Activated CD8-positive, alpha-beta memory T cell treated with anti-CD3 and anti-CD28 coated beads, Interleukin-2, amount 10 ng/mL, durations not matched to agents 7 days and 5 days (primary cell): ENCODE measurements at regions of chr5 and their contacts with region 1.

Region 1: DNA sequence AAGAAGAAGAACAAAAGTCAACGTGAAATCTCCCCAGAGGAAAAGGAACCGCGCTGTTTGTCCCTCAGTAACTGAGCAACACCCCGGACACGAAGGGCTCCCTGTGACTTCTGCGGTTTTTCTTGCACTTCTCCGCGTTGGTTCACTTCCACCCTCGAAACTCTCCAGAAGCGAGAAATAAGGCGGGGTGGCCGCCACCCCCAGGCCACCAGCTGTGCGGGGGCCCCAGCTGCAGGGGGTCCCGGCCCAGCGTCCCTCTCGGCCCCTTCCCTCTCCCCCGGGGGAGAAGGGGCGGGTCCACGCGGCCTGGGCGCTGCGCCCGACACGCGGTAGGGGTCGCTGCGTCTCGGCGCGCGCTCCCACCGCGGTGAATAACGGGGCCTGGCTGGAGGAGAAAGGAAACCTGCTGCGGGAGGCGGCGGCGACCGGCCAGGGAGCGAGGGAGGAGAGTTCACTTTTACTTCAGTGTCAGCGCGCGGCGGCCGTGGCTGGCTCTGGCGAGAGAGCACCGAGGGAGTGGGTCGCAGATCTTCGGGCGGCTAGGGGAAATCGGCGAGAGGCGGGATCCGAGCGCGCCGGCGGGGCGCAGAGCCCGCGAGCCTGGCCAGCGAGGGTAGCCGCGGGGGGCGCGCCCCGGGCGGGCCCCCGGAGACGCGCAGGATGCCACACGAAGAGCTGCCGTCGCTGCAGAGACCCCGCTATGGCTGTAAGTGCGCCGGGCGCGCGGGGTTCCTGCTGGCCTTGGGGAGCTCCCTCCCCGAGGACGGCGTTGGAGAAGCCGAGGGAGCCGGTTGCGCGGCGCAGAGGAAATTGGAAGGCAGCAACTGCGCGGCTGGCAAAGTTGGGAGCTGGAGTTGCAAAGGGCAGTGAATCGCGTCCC is at the start of gene IQGAP2:
- DNase-seq: peak; percentile 92
- ATAC-seq: peak; percentile 62
- H3K4me3 Mint-ChIP-seq: peak within 1 kb of the TSS; percentile 84
- H3K27ac Mint-ChIP-seq: peak within 1 kb of the TSS; percentile 98
- H3K4me1 Mint-ChIP-seq: peaks cover 58% of the 10 kb centered on the region
- H3K27me3 Mint-ChIP-seq: peaks cover 3% of the 10 kb centered on the region
- total RNA-seq, gene IQGAP2: 70.2 to 118 TPM

Region 2: GRCh38 chr5:76325876-76326491 is 77.1 kb before region 1 on chr5:
- CTCF ChIA-PET with region 1: interaction called, 29 read pairs
- DNase-seq: peak; percentile 86
- ATAC-seq: peak; percentile 96
- H3K4me3 Mint-ChIP-seq: peak overlapping the region; percentile 59
- H3K27ac Mint-ChIP-seq: peak overlapping the region; percentile 98
- H3K4me1 Mint-ChIP-seq: peaks cover 61% of the 10 kb centered on the region
- H3K27me3 Mint-ChIP-seq: no peaks in the 10 kb centered on the region

Region 3: DNA sequence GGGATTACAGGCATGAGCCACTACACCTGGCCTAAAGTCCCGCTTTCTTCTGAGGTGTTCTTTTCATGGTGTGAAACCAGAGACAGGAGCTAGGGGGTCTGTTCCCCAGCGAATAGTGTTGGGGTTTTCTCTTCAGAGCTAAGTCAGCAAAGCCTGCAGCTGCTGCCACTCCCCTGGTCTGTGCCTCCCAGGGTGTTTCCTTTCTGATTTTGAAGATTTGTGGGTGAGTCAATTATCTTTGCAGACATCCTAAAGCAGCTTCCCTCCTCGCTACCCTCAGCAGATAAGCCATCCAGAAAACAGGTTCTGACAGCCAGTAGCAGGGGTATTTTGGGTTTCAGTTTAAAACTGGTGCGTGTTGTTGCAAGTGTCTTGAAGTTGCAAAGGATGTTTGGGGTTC is 72.0 kb before region 1 on chr5:
- CTCF ChIA-PET with region 1: interaction called, 29 read pairs
- DNase-seq: peak; percentile 73
- ATAC-seq: peak; percentile 81
- H3K4me3 Mint-ChIP-seq: peak overlapping the region; percentile 37
- H3K27ac Mint-ChIP-seq: peak overlapping the region; percentile 88
- H3K4me1 Mint-ChIP-seq: peaks cover 69% of the 10 kb centered on the region
- H3K27me3 Mint-ChIP-seq: no peaks in the 10 kb centered on the region

Region 4: DNA sequence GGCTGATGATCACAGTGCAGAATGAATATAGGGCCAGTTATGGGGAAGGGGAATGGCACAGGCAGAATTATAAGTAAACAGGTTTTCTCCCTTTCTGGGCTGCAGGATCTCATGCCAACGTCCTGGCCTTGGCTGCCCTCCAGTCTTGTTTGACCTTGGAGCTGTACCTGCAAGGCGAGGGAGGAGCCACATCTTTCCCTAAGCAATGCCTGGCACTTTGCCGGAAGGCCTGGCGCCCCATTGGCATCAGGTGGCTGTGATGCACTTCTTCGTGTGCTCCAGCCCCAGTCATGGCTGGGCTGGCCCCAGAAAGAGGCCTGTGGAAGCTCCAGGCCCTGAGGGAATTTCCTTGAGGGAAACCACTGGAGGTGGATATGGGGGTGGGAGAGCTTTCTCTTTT is 16.8 kb before region 1 on chr5:
- CTCF ChIA-PET with region 1: interaction called, 32 read pairs
- DNase-seq: no peak
- ATAC-seq: no peak
- H3K4me3 Mint-ChIP-seq: no peak overlapping the region
- H3K27ac Mint-ChIP-seq: no peak overlapping the region
- H3K4me1 Mint-ChIP-seq: peaks cover 47% of the 10 kb centered on the region
- H3K27me3 Mint-ChIP-seq: no peaks in the 10 kb centered on the region

Region 5: DNA sequence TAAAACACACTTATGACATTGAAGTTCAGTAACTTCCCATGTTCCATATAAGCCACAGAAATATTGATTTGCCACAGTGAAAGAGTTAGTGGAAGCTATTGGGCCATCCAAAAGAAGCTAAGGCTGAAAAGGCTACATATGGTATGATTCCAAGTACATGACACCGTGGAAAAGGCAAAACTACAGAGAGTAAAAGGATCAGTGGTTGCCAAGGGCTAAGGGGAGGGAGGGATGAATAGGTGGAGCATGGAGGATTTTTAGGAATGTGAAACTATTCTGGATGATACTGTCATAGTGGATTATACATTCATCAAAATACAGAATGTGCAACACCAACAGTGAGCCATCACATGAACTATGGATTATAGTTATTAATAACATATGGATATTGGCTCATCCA is 110.4 kb after region 1 on chr5:
- CTCF ChIA-PET with region 1: no interaction called
- DNase-seq: no peak
- ATAC-seq: no peak
- H3K4me3 Mint-ChIP-seq: no peak overlapping the region
- H3K27ac Mint-ChIP-seq: no peak overlapping the region
- H3K4me1 Mint-ChIP-seq: no peaks in the 10 kb centered on the region
- H3K27me3 Mint-ChIP-seq: no peaks in the 10 kb centered on the region

Region 6: GRCh38 chr5:76544268-76544926 is 141.3 kb after region 1 on chr5:
- CTCF ChIA-PET with region 1: interaction called, 103 read pairs
- DNase-seq: peak; percentile 82
- ATAC-seq: peak; percentile 24
- H3K4me3 Mint-ChIP-seq: peak overlapping the region; percentile 68
- H3K27ac Mint-ChIP-seq: peak overlapping the region; percentile 94
- H3K4me1 Mint-ChIP-seq: peaks cover 90% of the 10 kb centered on the region
- H3K27me3 Mint-ChIP-seq: no peaks in the 10 kb centered on the region

Region 7: DNA sequence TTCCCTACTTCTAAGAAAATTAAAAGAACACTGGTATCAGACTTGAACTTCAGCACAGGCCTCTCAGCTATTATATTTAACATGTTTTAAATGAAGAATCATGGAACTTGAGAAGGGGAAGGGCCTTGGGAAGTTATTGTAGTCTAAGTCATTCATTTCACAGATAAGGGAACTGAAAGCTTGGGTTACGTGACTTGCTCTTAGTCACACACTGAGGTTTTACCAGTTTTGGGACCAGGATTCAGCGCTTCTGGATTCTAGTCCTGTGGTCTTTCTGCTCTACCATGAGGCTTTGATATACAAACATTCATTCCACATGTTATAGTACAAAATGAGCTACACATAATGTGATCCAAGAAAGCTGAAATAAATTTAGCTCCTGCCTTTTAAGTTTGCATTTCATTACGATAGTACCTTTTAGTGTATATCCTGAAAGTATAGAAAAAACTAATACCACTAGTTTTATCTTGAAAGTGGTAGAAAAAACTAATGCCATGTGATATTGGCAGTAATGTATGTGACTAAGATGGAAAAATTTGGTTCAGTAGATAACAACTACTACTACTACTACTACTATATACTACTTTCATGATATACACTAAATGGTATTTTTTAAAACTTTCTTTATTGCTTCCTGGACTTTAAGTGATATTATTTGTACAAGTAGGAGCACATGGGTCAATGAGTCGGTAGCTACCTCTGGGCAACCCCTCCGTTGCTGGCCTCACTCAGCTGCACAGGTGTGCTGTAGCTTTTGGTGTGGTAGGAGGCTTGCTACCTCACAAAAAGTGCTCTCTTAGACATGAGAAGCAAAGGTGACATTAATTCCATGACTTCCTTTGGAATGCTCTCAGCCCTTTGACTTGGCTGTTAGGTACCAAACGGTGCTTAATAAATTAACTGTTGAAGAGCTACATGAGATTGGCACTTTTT is 179.4 kb after region 1 on chr5:
- CTCF ChIA-PET with region 1: interaction called, 45 read pairs
- DNase-seq: no peak
- ATAC-seq: peak; percentile 45
- H3K4me3 Mint-ChIP-seq: no peak overlapping the region
- H3K27ac Mint-ChIP-seq: no peak overlapping the region
- H3K4me1 Mint-ChIP-seq: peaks cover 17% of the 10 kb centered on the region
- H3K27me3 Mint-ChIP-seq: no peaks in the 10 kb centered on the region